CD8-positive, alpha-beta T cell (primary cell): ENCODE measurements at regions of chr3 and their contacts with region 1.

Region 1: GRCh38 chr3:143119009-143119914 is at the start of gene CHST2:
- DNase-seq: peak; percentile 28 to 85 (median 66)
- ATAC-seq: peak; percentile 74
- H3K4me3 ChIP-seq: peak within 1 kb of the TSS; percentile 88 to 90
- H3K4me3 Mint-ChIP-seq: peak within 1 kb of the TSS; percentile 88
- H3K27ac ChIP-seq: peak within 1 kb of the TSS; percentile 54 to 56
- H3K27ac Mint-ChIP-seq: peak within 1 kb of the TSS; percentile 75
- H3K4me1 ChIP-seq: peaks cover 37% of the 10 kb centered on the region
- H3K4me1 Mint-ChIP-seq: peaks cover 32% of the 10 kb centered on the region
- H3K27me3 ChIP-seq: no peaks in the 10 kb centered on the region
- H3K27me3 Mint-ChIP-seq: no peaks in the 10 kb centered on the region
- CTCF ChIP-seq: no peak
- total RNA-seq, gene CHST2: 2.5 to 2.7 TPM

Region 2: GRCh38 chr3:142578327-142579223 is 540.7 kb before region 1 on chr3 and contains the start of gene ATR:
- CTCF ChIA-PET with region 1: no interaction called
- POLR2A ChIA-PET with region 1: no interaction called
- intact Hi-C with region 1: loop called in 1 of 2 experiments (anchors 5 kb)
- DNase-seq: peak; percentile 91 to 98 (median 97)
- ATAC-seq: peak; percentile 91
- H3K4me3 ChIP-seq: peak within 1 kb of the TSS; percentile 92 to 99
- H3K4me3 Mint-ChIP-seq: peak within 1 kb of the TSS; percentile 96
- H3K27ac ChIP-seq: peak within 1 kb of the TSS; percentile 97 to 99
- H3K27ac Mint-ChIP-seq: peak within 1 kb of the TSS; percentile 98
- H3K4me1 ChIP-seq: peaks cover 45% of the 10 kb centered on the region
- H3K4me1 Mint-ChIP-seq: peaks cover 52% of the 10 kb centered on the region
- H3K27me3 ChIP-seq: no peaks in the 10 kb centered on the region
- H3K27me3 Mint-ChIP-seq: no peaks in the 10 kb centered on the region
- CTCF ChIP-seq: no peak
- total RNA-seq, gene ATR: 26.7 to 28.0 TPM

Region 3: DNA sequence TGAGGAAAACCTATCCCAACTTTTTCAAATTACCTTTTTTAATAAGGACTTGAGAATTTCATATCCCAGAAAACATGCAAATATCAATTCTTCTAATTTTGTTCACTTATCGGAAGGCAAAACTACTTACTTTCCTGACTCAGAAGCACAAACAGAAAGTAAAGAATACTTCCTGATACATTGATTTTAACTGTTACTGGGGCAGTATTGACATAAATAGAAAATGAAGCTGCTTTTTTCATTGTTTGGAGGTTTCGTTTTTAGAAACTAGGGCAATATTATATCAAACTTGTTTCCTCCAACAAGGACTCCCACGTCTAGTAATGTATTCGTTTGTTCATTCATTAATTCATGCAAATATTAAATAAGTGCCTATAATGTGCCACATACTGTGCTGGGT is 174.9 kb before region 1 on chr3:
- CTCF ChIA-PET with region 1: no interaction called
- POLR2A ChIA-PET with region 1: no interaction called
- intact Hi-C with region 1: no loop called
- DNase-seq: no peak
- ATAC-seq: no peak
- H3K4me3 ChIP-seq: peak overlapping the region in 1 of 2 experiments; percentile 34
- H3K4me3 Mint-ChIP-seq: peak overlapping the region; percentile 38
- H3K27ac ChIP-seq: no peak overlapping the region
- H3K27ac Mint-ChIP-seq: no peak overlapping the region
- H3K4me1 ChIP-seq: no peaks in the 10 kb centered on the region
- H3K4me1 Mint-ChIP-seq: peaks cover 3% of the 10 kb centered on the region
- H3K27me3 ChIP-seq: peaks cover 0 to 5% of the 10 kb centered on the region in 2 experiments
- H3K27me3 Mint-ChIP-seq: peaks cover 24% of the 10 kb centered on the region
- CTCF ChIP-seq: no peak

Region 4: DNA sequence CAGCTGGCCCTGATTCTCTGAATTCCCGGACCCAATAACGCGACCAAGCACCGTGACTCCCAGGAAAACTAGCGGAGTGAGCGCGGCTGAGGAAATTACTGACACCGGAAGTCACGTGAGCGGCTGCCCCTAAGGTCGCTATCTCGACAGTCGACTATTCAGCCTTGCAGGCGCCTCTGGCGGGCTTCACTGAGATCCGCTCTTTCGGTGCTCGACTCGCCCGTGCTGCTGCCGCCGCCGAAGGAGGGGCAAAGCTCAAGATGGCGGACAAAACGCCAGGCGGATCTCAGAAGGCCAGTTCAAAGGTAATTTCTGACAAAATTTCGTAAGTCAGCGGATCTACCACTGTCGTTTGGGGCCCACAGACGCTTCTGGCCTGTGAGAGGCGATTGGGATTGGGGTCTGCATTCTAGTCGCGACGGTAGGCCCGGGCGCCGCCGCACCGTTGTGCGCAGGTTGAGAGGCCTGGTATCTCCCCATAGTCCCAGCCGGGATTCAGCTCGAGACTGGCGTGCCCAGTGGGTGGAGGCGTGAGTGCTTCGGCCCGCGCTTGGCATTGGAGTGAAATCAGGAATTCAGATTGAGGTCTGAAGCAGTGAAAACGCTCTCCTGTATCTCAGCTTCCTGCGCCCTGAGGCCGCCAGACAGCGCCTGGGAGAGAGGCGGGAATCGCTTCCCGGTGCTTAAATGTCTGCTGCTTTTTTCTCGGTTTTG is 117.7 kb before region 1 on chr3 and contains the start of gene U2SURP:
- CTCF ChIA-PET with region 1: no interaction called
- POLR2A ChIA-PET with region 1: no interaction called
- intact Hi-C with region 1: loop called in 1 of 2 experiments (anchors 1 kb)
- DNase-seq: peak; percentile 82 to 97 (median 90)
- ATAC-seq: peak; percentile 93
- H3K4me3 ChIP-seq: peak within 1 kb of the TSS; percentile 81 to 92
- H3K4me3 Mint-ChIP-seq: peak within 1 kb of the TSS; percentile 99
- H3K27ac ChIP-seq: peak within 1 kb of the TSS; percentile 91 to 92
- H3K27ac Mint-ChIP-seq: peak within 1 kb of the TSS; percentile 99
- H3K4me1 ChIP-seq: peaks cover 34% of the 10 kb centered on the region
- H3K4me1 Mint-ChIP-seq: peaks cover 42% of the 10 kb centered on the region
- H3K27me3 ChIP-seq: no peaks in the 10 kb centered on the region
- H3K27me3 Mint-ChIP-seq: no peaks in the 10 kb centered on the region
- CTCF ChIP-seq: no peak
- total RNA-seq, gene U2SURP: 186 TPM

Region 5: GRCh38 chr3:143179603-143180002 is 60.3 kb after region 1 on chr3:
- CTCF ChIA-PET with region 1: interaction called, 4 read pairs
- POLR2A ChIA-PET with region 1: no interaction called
- intact Hi-C with region 1: loop called in 1 of 2 experiments (anchors 2 kb)
- DNase-seq: no peak
- ATAC-seq: no peak
- H3K4me3 ChIP-seq: no peak overlapping the region
- H3K4me3 Mint-ChIP-seq: peak overlapping the region; percentile 15
- H3K27ac ChIP-seq: no peak overlapping the region
- H3K27ac Mint-ChIP-seq: peak overlapping the region; percentile 55
- H3K4me1 ChIP-seq: peaks cover 5% of the 10 kb centered on the region
- H3K4me1 Mint-ChIP-seq: peaks cover 40% of the 10 kb centered on the region
- H3K27me3 ChIP-seq: no peaks in the 10 kb centered on the region
- H3K27me3 Mint-ChIP-seq: no peaks in the 10 kb centered on the region
- CTCF ChIP-seq: no peak

Region 6: DNA sequence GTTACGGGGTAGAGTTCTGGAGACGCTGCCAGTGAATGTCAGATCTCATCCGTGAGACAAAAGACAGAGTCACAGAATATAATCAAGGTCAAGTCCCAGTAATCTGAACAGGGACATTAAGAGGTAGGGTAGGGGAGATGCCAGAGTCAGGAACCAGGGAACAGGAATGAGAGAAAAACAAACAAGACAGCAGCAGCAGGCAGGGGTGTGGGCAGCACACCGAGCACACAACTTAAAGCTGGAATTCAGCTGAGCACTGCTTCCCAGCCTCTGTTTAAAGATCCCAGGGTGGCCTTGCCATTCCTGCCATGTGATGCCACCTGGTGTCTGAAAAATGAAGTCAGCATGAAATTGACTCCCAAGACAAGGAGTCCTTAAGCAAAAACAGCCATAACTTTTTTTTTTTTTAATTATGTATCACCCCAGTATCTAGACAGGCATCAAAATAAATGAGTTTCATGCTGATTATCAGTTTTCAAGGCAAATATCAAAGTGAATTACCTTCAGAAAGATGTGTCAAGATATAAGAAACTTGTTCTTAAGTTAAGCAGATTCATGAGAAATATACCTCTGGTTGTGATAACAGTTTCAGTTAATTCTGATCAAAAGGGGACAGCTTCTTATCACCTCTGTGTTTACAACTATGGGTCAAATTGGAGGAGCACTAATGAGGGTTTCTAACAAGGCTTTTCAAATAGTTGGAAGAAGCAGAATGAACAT is 525.3 kb after region 1 on chr3:
- CTCF ChIA-PET with region 1: interaction called, 7 read pairs
- POLR2A ChIA-PET with region 1: no interaction called
- intact Hi-C with region 1: loop called (anchors 1 to 10 kb)
- DNase-seq: peak in 4 of 9 experiments; percentile 12 to 48 (median 21)
- ATAC-seq: no peak
- H3K4me3 ChIP-seq: no peak overlapping the region
- H3K4me3 Mint-ChIP-seq: no peak overlapping the region
- H3K27ac ChIP-seq: no peak overlapping the region
- H3K27ac Mint-ChIP-seq: peak overlapping the region; percentile 8
- H3K4me1 ChIP-seq: no peaks in the 10 kb centered on the region
- H3K4me1 Mint-ChIP-seq: no peaks in the 10 kb centered on the region
- H3K27me3 ChIP-seq: no peaks in the 10 kb centered on the region
- H3K27me3 Mint-ChIP-seq: no peaks in the 10 kb centered on the region
- CTCF ChIP-seq: no peak

Region 7: GRCh38 chr3:143763564-143764162 is 644.4 kb after region 1 on chr3:
- CTCF ChIA-PET with region 1: no interaction called
- POLR2A ChIA-PET with region 1: no interaction called
- intact Hi-C with region 1: loop called in 1 of 2 experiments (anchors 5 kb)
- DNase-seq: peak in 1 of 9 experiments; percentile 36
- ATAC-seq: no peak
- H3K4me3 ChIP-seq: no peak overlapping the region
- H3K4me3 Mint-ChIP-seq: no peak overlapping the region
- H3K27ac ChIP-seq: no peak overlapping the region
- H3K27ac Mint-ChIP-seq: no peak overlapping the region
- H3K4me1 ChIP-seq: peaks cover 5% of the 10 kb centered on the region
- H3K4me1 Mint-ChIP-seq: peaks cover 16% of the 10 kb centered on the region
- H3K27me3 ChIP-seq: no peaks in the 10 kb centered on the region
- H3K27me3 Mint-ChIP-seq: no peaks in the 10 kb centered on the region
- CTCF ChIP-seq: peak; percentile 23